Caco-2 (cell line): ENCODE measurements at regions of chr2 and their contacts with region 1.

Region 1: GRCh38 chr2:85707304-85707703 is 13.1 kb downstream of the GNLY start:
- DNase-seq: peak; percentile 74 to 84
- H3K4me3 ChIP-seq: no peak overlapping the region
- H3K4me3 Mint-ChIP-seq: peak overlapping the region; percentile 23
- H3K27ac Mint-ChIP-seq: no peak overlapping the region
- H3K4me1 ChIP-seq: no peaks in the 10 kb centered on the region
- H3K4me1 Mint-ChIP-seq: no peaks in the 10 kb centered on the region
- H3K27me3 ChIP-seq: no peaks in the 10 kb centered on the region
- H3K27me3 Mint-ChIP-seq: peaks cover 14% of the 10 kb centered on the region
- CTCF ChIP-seq: peak; percentile 73 to 85

Region 2: DNA sequence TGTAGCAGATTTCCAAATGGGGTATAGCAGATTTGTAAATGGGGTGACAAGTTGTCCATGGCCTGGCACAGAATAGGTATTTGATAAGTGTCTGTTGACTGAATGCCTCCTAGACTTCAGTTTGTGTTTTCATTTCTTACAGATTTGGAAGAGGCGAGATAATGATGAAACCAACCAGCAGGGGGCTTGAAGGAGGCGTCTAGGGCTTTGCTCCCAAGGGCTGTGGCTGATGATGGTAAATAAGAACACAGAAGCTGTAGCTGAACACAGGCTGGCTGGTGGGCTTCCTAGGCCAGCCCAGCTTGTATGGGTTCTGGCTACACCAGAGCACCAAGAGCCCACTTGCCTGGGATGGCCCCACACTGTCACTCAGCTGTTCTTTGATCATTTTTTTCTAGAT is 58.7 kb before region 1 on chr2:
- CTCF ChIA-PET with region 1: no interaction called
- POLR2A ChIA-PET with region 1: no interaction called
- intact Hi-C with region 1: loop called (anchors 5 kb)
- DNase-seq: peak in 1 of 2 experiments; percentile 49
- H3K4me3 ChIP-seq: no peak overlapping the region
- H3K4me3 Mint-ChIP-seq: no peak overlapping the region
- H3K27ac Mint-ChIP-seq: no peak overlapping the region
- H3K4me1 ChIP-seq: 0 out of 2 replicates have a peak, but pooled peaks cover 5% of the 10 kb centered on the region
- H3K4me1 Mint-ChIP-seq: peaks cover 12% of the 10 kb centered on the region
- H3K27me3 ChIP-seq: no peaks in the 10 kb centered on the region
- H3K27me3 Mint-ChIP-seq: no peaks in the 10 kb centered on the region
- CTCF ChIP-seq: peak; percentile 52 to 62

Region 3: DNA sequence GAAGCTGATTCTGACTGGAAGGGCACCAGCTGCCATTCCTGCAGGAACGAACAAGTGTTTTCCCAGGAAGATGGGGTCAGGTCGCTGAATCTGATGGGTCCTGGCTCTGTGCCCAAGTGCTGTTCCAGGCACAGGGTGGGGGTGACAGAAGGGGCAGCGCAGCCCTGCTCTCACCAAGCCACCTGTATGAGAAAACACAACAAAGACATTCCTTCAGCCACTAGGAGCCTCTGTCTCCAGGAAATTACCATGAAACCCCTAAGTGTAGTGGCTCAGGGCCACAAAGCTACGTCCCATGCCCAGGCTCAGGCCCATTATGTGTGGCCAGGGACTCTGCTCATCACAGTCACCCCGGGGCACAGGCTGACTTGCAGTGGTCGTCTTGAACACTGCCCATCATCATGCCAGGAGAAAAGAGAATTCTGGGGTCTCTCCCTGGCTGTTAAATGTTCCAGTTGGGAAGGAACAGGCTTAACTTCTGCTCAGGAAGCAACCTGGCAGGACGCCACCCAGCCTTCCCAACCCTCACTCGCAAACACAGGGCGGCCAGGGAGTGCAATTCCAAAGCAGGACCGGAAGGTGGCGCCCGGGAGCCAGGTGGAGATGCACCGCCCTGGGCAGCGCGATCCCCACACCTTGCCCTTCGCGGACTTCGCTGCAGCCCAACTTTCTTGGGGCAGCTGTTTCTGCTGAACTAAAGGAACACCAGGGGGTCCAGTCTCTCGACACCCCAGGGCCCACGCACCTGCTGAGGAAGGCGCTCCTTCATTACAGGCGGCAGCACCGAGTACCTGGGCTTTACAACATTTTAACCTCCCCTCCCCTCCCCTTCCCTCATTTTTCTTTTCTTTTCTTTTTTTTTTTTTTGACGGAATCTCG is 28.3 kb before region 1 on chr2:
- CTCF ChIA-PET with region 1: interaction called, 7 read pairs
- POLR2A ChIA-PET with region 1: no interaction called
- intact Hi-C with region 1: loop called (anchors 1 kb)
- DNase-seq: peak; percentile 73 to 89
- H3K4me3 ChIP-seq: 0 out of 2 replicates have a peak overlapping the region, but pooled peaks have one; percentile 21
- H3K4me3 Mint-ChIP-seq: no peak overlapping the region
- H3K27ac Mint-ChIP-seq: no peak overlapping the region
- H3K4me1 ChIP-seq: peaks cover 5% of the 10 kb centered on the region; the same call in 1 of the 2 replicates
- H3K4me1 Mint-ChIP-seq: no peaks in the 10 kb centered on the region
- H3K27me3 ChIP-seq: no peaks in the 10 kb centered on the region
- H3K27me3 Mint-ChIP-seq: peaks cover 2% of the 10 kb centered on the region
- CTCF ChIP-seq: peak; percentile 96 to 98